Activated CD4-positive, alpha-beta memory T cell treated with anti-CD3 and anti-CD28 coated beads, Interleukin-2, amount 10 ng/mL, durations not matched to agents 7 days and 5 days (primary cell): ENCODE measurements at regions of chr3 and their contacts with region 1.

Region 1: DNA sequence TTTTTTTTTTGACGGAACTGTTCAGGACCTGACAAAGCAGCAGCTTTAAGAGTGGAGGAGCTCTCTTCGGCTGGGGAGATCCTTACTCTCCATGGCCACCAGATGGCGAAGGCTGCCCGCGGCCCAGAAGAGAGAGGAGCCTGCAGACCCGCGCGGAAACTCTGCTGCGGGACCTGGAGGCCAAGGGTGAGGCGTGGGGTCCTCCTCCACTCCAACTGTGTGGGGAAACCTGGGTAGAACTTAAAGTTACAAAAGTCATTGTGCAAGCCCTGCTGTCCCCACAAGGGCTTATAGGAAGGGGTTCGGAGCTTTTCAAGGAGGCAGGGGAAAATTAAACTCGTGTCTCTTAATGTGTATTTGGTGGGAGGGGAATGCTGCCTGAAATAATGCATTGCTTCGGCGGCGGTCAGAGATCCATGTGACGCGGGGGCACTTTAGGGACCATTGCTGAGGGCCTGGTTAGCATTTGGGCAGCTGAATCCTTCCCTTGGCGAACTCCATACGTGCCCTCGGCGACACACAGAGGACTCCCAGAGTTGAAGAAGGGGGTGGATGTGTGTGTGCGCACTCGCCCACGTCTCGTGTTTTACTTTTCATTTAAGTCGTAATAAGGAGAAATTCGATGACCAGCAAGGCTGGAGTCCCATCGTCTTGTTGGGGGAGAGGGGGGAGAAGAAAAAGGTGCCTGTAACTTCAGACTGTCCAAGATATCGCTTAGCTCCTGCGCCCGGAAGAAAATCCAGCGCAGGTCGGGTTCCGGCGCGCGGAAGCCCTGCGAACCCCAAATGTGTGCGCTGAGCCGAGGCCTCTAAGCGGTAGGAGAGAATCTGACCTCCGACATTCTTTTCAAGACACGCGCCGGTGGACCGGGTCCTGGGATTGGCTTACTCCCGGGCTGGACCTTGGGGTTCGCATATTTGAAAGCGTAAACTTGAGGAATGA is 9.7 kb downstream of the EOMES start:
- DNase-seq: peak; percentile 84
- H3K4me3 Mint-ChIP-seq: peak overlapping the region; percentile 79
- H3K27ac Mint-ChIP-seq: peak overlapping the region; percentile 64
- H3K4me1 Mint-ChIP-seq: peaks cover 35% of the 10 kb centered on the region
- H3K27me3 Mint-ChIP-seq: peaks cover 49% of the 10 kb centered on the region

Region 2: GRCh38 chr3:27699067-27699466 is 13.3 kb before region 1 on chr3:
- CTCF ChIA-PET with region 1: interaction called, 13 read pairs
- POLR2A ChIA-PET with region 1: no interaction called
- DNase-seq: no peak
- H3K4me3 Mint-ChIP-seq: no peak overlapping the region
- H3K27ac Mint-ChIP-seq: no peak overlapping the region
- H3K4me1 Mint-ChIP-seq: no peaks in the 10 kb centered on the region
- H3K27me3 Mint-ChIP-seq: no peaks in the 10 kb centered on the region

Region 3: GRCh38 chr3:28286595-28286994 is 574.2 kb after region 1 on chr3:
- CTCF ChIA-PET with region 1: interaction called, 48 read pairs
- POLR2A ChIA-PET with region 1: interaction called, 4 read pairs
- DNase-seq: no peak
- H3K4me3 Mint-ChIP-seq: no peak overlapping the region
- H3K27ac Mint-ChIP-seq: no peak overlapping the region
- H3K4me1 Mint-ChIP-seq: peaks cover 5% of the 10 kb centered on the region
- H3K27me3 Mint-ChIP-seq: no peaks in the 10 kb centered on the region

Region 4: GRCh38 chr3:28328188-28329151 is 616.1 kb after region 1 on chr3:
- CTCF ChIA-PET with region 1: interaction called, 103 read pairs
- POLR2A ChIA-PET with region 1: interaction called, 16 read pairs
- DNase-seq: no peak
- H3K4me3 Mint-ChIP-seq: no peak overlapping the region
- H3K27ac Mint-ChIP-seq: no peak overlapping the region
- H3K4me1 Mint-ChIP-seq: peaks cover 36% of the 10 kb centered on the region
- H3K27me3 Mint-ChIP-seq: no peaks in the 10 kb centered on the region

Region 5: DNA sequence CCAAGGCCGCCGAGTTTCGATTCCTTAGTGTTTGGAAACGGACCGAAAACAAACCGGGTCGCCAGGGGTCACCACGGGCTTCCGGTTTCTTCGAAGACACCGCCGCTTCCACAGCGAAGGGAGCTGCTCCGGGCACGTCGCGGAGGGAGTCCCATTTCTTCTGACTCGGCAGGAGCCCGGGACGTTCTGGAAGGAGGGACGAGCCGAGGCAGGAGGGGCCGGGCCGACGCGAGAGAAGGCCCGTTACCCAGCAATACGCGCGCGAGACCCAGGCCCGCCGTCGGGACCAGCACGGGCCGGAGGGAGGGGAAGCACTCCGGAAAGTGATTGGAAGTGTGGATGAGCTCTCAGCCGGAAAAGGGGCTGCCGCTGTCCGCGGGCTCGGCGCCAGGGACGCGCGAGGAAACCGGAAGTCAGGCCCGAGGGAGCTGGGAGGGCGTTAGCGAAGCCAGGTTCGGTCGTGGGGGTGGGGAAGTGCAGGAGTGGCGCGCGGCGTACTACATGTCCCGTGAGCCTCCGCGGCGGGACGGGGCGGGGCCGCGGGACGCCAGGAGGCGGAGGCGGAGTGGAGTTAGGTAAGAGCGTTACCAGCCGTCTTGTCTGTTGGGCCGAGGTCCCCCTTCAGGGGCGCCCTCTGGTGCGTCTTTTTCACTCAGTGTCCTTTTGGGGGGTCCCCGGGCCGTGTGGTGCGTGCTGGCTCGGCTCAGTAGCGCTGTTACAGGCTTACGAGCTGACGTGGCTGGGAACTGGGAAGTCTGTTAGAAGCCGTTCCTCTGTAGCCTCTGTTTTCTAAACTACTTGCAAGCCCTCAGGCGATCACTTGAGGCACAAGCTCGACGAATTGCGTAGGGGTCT is 636.4 kb after region 1 on chr3 and contains the starts of genes AZI2 and ZCWPW2:
- CTCF ChIA-PET with region 1: interaction called, 25 read pairs
- POLR2A ChIA-PET with region 1: interaction called, 15 read pairs
- DNase-seq: peak; percentile 94
- H3K4me3 Mint-ChIP-seq: peak within 1 kb of the TSS; percentile 89
- H3K27ac Mint-ChIP-seq: peak within 1 kb of the TSS; percentile 92
- H3K4me1 Mint-ChIP-seq: peaks cover 52% of the 10 kb centered on the region
- H3K27me3 Mint-ChIP-seq: no peaks in the 10 kb centered on the region
- total RNA-seq, gene AZI2: 75.5 to 80.1 TPM
- total RNA-seq, gene ZCWPW2: 0.25 to 0.48 TPM